ENCODE measurements at regions of chr6 and their contacts with region 1.

Region 1: GRCh38 chr6:162345051-162345511 is 382.5 kb downstream of the PRKN start:
- DNase-seq: no peak
- ATAC-seq: no peak
- H3K4me3 ChIP-seq: no peak overlapping the region
- H3K4me3 Mint-ChIP-seq: no peak overlapping the region
- H3K27ac ChIP-seq: no peak overlapping the region
- H3K27ac Mint-ChIP-seq: no peak overlapping the region
- H3K4me1 ChIP-seq: no peaks in the 10 kb centered on the region
- H3K4me1 Mint-ChIP-seq: no peaks in the 10 kb centered on the region
- H3K27me3 ChIP-seq: no peaks in the 10 kb centered on the region
- H3K27me3 Mint-ChIP-seq: no peaks in the 10 kb centered on the region

Region 2: DNA sequence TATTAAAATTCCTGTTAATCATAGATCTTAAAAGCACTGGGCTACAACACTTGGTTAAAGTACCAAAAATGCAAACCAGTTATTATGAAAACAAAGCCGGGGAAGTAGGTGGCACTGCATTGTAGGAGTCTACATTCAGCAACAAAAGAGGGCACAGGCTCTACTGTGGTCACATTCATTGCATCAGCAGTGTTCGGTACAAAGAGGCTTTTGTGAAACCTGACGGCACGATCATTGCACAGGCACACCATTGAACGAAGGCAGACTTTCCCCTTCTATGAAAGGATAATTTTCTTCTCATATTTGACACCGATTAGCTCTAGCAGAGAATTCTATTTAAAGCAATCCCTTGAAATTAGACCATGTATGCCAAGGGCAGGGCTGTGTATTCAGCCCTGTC is 1026.6 kb before region 1 on chr6:
- CTCF ChIA-PET with region 1: no interaction called
- POLR2A ChIA-PET with region 1: no interaction called
- intact Hi-C with region 1: no loop called
- DNase-seq: no peak
- ATAC-seq: no peak
- H3K4me3 ChIP-seq: no peak overlapping the region
- H3K4me3 Mint-ChIP-seq: no peak overlapping the region
- H3K27ac ChIP-seq: no peak overlapping the region
- H3K27ac Mint-ChIP-seq: no peak overlapping the region
- H3K4me1 ChIP-seq: no peaks in the 10 kb centered on the region
- H3K4me1 Mint-ChIP-seq: no peaks in the 10 kb centered on the region
- H3K27me3 ChIP-seq: no peaks in the 10 kb centered on the region
- H3K27me3 Mint-ChIP-seq: peaks cover 7 to 21% (median 8%) of the 10 kb centered on the region in 5 donors

Region 3: GRCh38 chr6:162198925-162199324 is 146.2 kb before region 1 on chr6:
- CTCF ChIA-PET with region 1: no interaction called
- POLR2A ChIA-PET with region 1: no interaction called
- intact Hi-C with region 1: no loop called
- DNase-seq: no peak
- ATAC-seq: no peak
- H3K4me3 ChIP-seq: no peak overlapping the region
- H3K4me3 Mint-ChIP-seq: no peak overlapping the region
- H3K27ac ChIP-seq: no peak overlapping the region
- H3K27ac Mint-ChIP-seq: no peak overlapping the region
- H3K4me1 ChIP-seq: no peaks in the 10 kb centered on the region
- H3K4me1 Mint-ChIP-seq: no peaks in the 10 kb centered on the region
- H3K27me3 ChIP-seq: no peaks in the 10 kb centered on the region
- H3K27me3 Mint-ChIP-seq: no peaks in the 10 kb centered on the region

Region 4: DNA sequence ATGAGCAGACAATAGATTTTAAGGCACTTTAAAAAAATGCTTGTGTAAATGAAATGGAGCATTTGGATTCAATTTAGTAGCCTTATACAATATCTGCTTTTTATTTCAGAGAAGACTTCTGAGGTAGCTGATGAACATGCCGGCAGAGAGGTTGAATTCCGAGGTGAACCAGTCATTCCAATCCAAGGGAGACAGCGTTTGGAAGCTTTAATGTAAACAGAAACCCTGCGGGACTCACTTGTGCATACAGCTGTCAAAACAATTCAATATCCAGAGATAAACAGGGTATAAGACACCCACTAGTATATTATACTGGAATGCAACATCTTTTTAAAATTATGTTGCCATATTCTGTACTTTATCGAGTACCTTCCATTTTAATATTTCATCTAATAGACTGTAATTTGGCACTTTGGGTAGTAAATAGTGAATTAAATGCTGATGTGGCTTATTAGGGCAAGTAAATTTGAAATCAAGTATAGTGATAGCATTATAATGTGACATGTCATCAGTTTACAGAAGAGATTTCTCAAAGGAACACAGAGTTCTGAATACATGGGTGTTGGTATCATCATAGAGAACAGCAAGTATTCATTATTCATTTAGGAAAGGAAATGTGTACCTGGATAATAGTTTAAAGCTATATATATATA is 34.8 kb after region 1 on chr6:
- CTCF ChIA-PET with region 1: no interaction called
- POLR2A ChIA-PET with region 1: no interaction called
- intact Hi-C with region 1: loop called in 1 of 2 experiments (anchors 1 kb)
- DNase-seq: no peak
- ATAC-seq: no peak
- H3K4me3 ChIP-seq: no peak overlapping the region
- H3K4me3 Mint-ChIP-seq: no peak overlapping the region
- H3K27ac ChIP-seq: no peak overlapping the region
- H3K27ac Mint-ChIP-seq: no peak overlapping the region
- H3K4me1 ChIP-seq: no peaks in the 10 kb centered on the region
- H3K4me1 Mint-ChIP-seq: no peaks in the 10 kb centered on the region
- H3K27me3 ChIP-seq: no peaks in the 10 kb centered on the region
- H3K27me3 Mint-ChIP-seq: no peaks in the 10 kb centered on the region

Measured in naive thymus-derived CD4-positive, alpha-beta T cell (primary cell).